Breast epithelium (tissue), 4 donors: ENCODE measurements at regions of chr7 and their contacts with region 1.

Region 1: GRCh38 chr7:104761892-104762291 is 252.1 kb upstream of the KMT2E start:
- DNase-seq: no peak
- H3K4me3 ChIP-seq: no peak overlapping the region
- H3K27ac ChIP-seq: no peak overlapping the region
- H3K4me1 ChIP-seq: no peaks in the 10 kb centered on the region
- H3K27me3 ChIP-seq: no peaks in the 10 kb centered on the region
- CTCF ChIP-seq: no peak
- POLR2A ChIP-seq: no peak

Region 2: GRCh38 chr7:104126411-104126841 is 635.5 kb before region 1 on chr7:
- intact Hi-C with region 1: no loop called
- DNase-seq: no peak
- H3K4me3 ChIP-seq: no peak overlapping the region
- H3K27ac ChIP-seq: no peak overlapping the region
- H3K4me1 ChIP-seq: no peaks in the 10 kb centered on the region
- H3K27me3 ChIP-seq: no peaks in the 10 kb centered on the region
- CTCF ChIP-seq: no peak
- POLR2A ChIP-seq: no peak

Region 3: DNA sequence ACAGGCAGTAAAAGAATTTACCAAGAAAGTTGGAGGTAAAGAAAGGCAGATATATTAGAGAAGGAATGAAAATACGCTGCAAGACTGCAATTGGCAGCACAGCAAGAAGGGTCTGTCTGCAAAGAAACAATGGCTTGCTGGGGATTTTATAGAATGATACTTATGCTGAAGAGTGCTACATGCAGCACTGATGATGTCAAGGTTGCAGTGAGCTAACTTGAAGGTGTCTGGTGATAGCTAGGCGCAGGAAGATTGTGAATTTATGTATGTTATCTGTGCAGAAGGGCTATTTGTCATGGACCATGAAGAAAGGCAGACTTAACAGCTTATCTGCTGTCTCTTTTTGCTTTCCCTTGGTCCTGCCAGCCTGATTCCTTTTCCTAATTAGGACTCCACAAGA is 67.2 kb before region 1 on chr7:
- intact Hi-C with region 1: loop called (anchors 2 kb)
- DNase-seq: no peak
- H3K4me3 ChIP-seq: no peak overlapping the region
- H3K27ac ChIP-seq: no peak overlapping the region
- H3K4me1 ChIP-seq: no peaks in the 10 kb centered on the region
- H3K27me3 ChIP-seq: no peaks in the 10 kb centered on the region
- CTCF ChIP-seq: no peak
- POLR2A ChIP-seq: no peak